Activated T-helper 1 cell treated with anti-CD3 and anti-CD28 coated beads, Interleukin-12 subunit alpha, Interleukin-12 subunit beta, Interleukin-2, Interleukin-4 antibody, amounts not matched to agents 30 ng/mL and 10 ng/mL and 1 ng/mL, durations not matched to agents 14 hours and 24 hours and 36 hours (primary cell): ENCODE measurements at regions of chrX and their contacts with region 1.

Region 1: DNA sequence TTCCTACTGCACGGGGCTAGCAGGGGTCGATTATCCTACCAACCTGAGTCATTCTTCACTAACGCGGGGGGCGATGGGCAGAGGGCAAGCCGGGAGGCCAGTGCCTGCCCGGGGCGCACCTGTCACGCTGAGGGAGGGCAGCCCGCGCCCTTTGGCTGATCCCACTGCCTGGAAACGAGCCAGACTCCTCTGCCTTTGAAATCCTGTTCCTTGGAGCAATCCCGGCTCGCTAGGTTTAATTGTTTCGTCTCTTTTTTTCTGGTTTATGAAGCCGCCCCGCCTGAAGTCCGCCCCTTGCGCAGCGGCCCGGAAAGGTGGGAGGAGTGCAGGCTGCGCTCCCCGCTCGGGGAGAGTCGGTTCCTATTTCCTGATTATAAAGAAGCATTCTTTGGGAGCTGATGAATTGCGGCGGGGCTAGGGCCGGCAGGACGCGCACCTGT is 484.3 kb downstream of the BCOR start:
- DNase-seq: peak; percentile 3
- H3K4me3 Mint-ChIP-seq: peak overlapping the region; percentile 87
- H3K27ac Mint-ChIP-seq: peak overlapping the region; percentile 95
- H3K4me1 Mint-ChIP-seq: peaks cover 42% of the 10 kb centered on the region
- H3K27me3 Mint-ChIP-seq: peaks cover 5% of the 10 kb centered on the region

Region 2: GRCh38 chrX:38803586-38804431 is 809.7 kb before region 1 on chrX:
- intact Hi-C with region 1: loop called (anchors 1 kb)
- DNase-seq: peak; percentile 69
- H3K4me3 Mint-ChIP-seq: peak overlapping the region; percentile 89
- H3K27ac Mint-ChIP-seq: peak overlapping the region; percentile 91
- H3K4me1 Mint-ChIP-seq: peaks cover 15% of the 10 kb centered on the region
- H3K27me3 Mint-ChIP-seq: no peaks in the 10 kb centered on the region

Region 3: DNA sequence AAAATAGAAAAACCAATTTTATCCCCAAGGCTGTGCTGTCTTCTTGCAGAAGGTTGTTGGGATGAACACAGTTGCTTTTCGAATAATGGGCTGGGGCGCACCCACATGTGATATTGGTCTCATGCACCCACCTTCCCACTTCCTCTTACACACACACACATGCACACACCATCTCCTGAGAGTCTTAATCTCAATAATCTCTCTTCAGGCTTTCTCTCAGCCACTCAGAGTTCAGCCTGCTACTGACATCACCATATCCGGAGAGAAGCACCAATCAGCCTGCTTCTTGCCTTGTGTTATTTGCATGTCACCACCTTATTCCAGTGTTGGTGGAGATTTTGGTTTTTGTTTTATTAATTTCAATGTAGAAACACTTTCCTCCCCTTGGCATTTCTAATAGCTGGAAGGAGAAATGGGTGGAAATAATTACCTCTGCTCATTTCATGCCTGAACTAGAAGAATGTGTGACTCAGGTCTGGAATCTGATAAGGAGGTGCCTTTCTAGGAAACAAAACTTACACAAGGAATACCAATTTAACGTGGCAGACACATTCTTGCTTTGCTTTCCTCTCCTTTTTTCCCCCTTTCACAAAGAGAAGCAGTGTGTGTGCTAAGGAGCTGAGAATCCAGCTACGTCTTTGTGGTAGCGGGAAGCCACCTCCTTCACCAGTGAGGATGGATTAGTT is 412.1 kb before region 1 on chrX:
- intact Hi-C with region 1: loop called (anchors 1 kb)
- DNase-seq: no peak
- H3K4me3 Mint-ChIP-seq: no peak overlapping the region
- H3K27ac Mint-ChIP-seq: peak overlapping the region; percentile 79
- H3K4me1 Mint-ChIP-seq: peaks cover 82% of the 10 kb centered on the region
- H3K27me3 Mint-ChIP-seq: no peaks in the 10 kb centered on the region

Region 4: DNA sequence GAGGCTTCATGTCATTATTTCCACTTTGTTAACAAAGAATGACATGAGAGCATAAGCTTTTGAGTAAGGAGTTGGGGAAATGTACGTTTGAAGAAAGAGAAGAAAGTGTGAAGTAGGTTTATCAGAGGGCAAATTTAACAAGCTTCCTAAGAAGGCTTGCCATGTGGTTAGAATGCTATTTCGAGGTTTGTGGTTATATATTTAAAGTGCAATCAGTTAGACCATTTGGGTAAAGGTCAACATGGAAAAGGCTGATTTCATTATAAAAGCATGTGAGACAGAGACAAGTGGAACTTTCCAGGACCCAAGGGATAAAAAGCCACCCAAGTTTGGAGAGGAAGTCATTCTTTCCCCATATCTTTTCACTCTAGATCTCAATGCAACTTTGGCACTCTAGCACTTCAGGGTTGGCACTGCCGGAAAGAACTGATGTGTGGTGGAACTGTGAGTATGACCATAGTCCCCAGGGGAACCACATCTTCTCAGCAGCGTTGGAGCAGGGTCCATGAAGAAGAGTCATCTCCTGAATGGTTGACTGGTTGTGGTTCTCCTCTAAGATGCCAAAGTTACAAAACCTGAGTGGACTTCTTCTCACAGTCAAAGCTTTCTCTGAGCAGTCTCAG is 282.3 kb before region 1 on chrX:
- intact Hi-C with region 1: loop called (anchors 1 kb)
- DNase-seq: peak; percentile 3
- H3K4me3 Mint-ChIP-seq: peak overlapping the region; percentile 42
- H3K27ac Mint-ChIP-seq: peak overlapping the region; percentile 76
- H3K4me1 Mint-ChIP-seq: peaks cover 73% of the 10 kb centered on the region
- H3K27me3 Mint-ChIP-seq: peaks cover 2% of the 10 kb centered on the region

Region 5: DNA sequence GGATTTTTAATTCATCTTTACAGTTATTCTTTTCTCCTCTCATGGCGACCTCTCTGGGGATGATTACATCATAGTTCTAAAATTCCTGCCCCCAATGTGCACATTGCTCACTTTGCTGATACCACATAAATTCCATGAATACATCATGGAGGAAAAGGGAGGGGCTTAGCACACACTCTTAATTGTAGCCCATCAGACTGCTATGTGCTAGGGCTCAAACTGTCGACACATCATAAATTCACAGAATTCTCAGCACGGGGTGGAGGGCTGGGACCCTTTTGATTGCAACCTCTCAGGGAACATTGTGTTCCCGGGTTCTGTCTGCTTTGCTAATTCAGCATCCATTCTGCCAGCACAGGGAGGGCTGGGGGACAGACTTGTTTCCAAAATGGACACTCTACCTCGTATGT is 108.6 kb before region 1 on chrX:
- intact Hi-C with region 1: loop called (anchors 5 kb)
- DNase-seq: no peak
- H3K4me3 Mint-ChIP-seq: no peak overlapping the region
- H3K27ac Mint-ChIP-seq: no peak overlapping the region
- H3K4me1 Mint-ChIP-seq: peaks cover 26% of the 10 kb centered on the region
- H3K27me3 Mint-ChIP-seq: peaks cover 6% of the 10 kb centered on the region

Region 6: GRCh38 chrX:39772057-39772832 is 158.7 kb after region 1 on chrX:
- intact Hi-C with region 1: loop called (anchors 1 kb)
- DNase-seq: peak; percentile 22
- H3K4me3 Mint-ChIP-seq: peak overlapping the region; percentile 73
- H3K27ac Mint-ChIP-seq: peak overlapping the region; percentile 98
- H3K4me1 Mint-ChIP-seq: peaks cover 48% of the 10 kb centered on the region
- H3K27me3 Mint-ChIP-seq: no peaks in the 10 kb centered on the region

Region 7: DNA sequence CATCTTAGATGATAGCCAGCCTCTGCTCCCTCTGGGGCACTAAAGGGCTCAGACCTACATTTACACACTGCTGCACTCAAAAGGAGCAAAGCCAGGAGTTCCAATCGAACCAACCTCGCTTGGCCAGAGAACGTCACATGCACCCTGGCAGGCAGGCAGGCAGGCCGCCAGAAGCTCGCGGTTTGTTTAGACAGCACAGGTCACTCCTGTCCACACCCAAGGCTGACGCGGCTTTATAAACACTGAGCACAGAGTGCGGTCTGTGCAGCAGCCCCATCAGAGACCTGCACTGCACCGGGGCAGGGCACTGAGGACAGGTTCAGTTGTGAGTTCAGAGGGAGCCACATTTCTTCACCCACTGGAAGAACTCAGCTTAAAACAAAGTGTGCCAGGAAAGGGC is 340.4 kb after region 1 on chrX:
- intact Hi-C with region 1: no loop called
- DNase-seq: no peak
- H3K4me3 Mint-ChIP-seq: no peak overlapping the region
- H3K27ac Mint-ChIP-seq: no peak overlapping the region
- H3K4me1 Mint-ChIP-seq: peaks cover 11% of the 10 kb centered on the region
- H3K27me3 Mint-ChIP-seq: no peaks in the 10 kb centered on the region